ENCODE measurements at regions of chr1 and their contacts with region 1.

Region 1: DNA sequence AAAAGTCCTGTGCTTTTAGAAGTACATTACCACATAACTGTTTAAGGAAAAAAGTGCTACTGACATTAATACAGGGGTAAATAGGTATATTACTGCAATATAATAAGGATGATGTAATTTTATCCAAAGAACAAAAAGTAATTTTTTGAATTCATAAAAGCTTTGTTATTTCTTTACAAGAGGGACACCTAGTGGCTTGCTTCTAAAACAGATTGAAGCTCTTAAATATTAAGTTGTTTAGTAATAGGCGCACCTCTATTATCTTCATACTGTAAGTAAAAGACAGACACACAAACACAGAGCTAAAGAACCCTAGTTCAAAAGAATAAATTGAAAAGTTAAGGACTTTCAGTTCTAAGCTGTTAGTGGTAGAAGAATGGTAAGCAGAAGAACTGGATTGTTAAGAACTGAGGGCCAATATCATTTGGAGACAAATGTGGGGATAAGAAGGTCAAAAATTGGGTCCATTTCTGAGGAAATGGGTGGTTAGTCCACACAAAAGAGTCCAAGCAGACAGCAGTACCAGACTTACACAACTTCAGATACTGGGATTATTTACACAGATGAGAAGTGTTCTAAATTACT is 15.4 kb downstream of the ZNHIT6 start:
- DNase-seq: no peak
- ATAC-seq: no peak
- H3K4me3 ChIP-seq: no peak overlapping the region
- H3K4me1 ChIP-seq: no peaks in the 10 kb centered on the region
- CTCF ChIP-seq: no peak

Region 2: GRCh38 chr1:85307987-85308832 is 384.6 kb before region 1 on chr1:
- intact Hi-C with region 1: loop called in 1 of 2 experiments (anchors 10 kb)
- DNase-seq: peak; percentile 80 to 94 (median 90)
- ATAC-seq: peak; percentile 98
- H3K4me3 ChIP-seq: no peak overlapping the region
- H3K4me1 ChIP-seq: peaks cover 8% of the 10 kb centered on the region
- CTCF ChIP-seq: peak; percentile 77

Region 3: DNA sequence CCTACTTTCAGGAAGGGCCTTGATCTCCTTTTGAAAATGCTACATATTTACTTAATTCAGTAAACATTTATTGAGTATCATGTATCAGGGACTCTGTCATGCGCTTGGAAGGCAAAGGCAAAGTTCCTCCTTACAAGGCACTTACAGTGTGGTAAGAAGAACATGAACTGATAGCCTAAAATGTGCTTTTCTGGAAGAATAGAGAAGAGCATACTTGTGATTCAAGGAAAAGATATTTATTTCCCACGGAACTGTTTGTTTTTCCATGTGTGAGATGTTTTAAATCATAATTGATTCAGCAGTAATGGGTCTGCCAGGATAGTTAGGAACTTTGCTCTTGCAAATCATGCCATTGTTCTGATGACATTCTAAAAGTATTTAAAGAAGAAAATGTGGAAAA is 125.5 kb after region 1 on chr1:
- intact Hi-C with region 1: no loop called
- DNase-seq: no peak
- ATAC-seq: no peak
- H3K4me3 ChIP-seq: no peak overlapping the region
- H3K4me1 ChIP-seq: no peaks in the 10 kb centered on the region
- CTCF ChIP-seq: no peak

Measured in mucosa of descending colon (tissue), 3 donors.